H1 (cell line): ENCODE measurements at regions of chr1 and their contacts with region 1.

Region 1: GRCh38 chr1:200510228-200510623 is 100.4 kb upstream of the ZNF281 start:
- DNase-seq: peak in 1 of 2 experiments; percentile 83
- H3K4me3 ChIP-seq: no peak overlapping the region
- H3K27ac ChIP-seq: no peak overlapping the region
- H3K4me1 ChIP-seq: no peaks in the 10 kb centered on the region
- H3K27me3 ChIP-seq: no peaks in the 10 kb centered on the region
- CTCF ChIP-seq: peak; percentile 47 to 91 (median 82)
- EP300 ChIP-seq: no peak
- POLR2A ChIP-seq: no peak
- RAD21 ChIP-seq: peak; percentile 98

Region 2: GRCh38 chr1:200172311-200172710 is 337.9 kb before region 1 on chr1:
- CTCF ChIA-PET with region 1: no interaction called
- POLR2A ChIA-PET with region 1: no interaction called
- DNase-seq: no peak
- H3K4me3 ChIP-seq: no peak overlapping the region
- H3K27ac ChIP-seq: no peak overlapping the region
- H3K4me1 ChIP-seq: peaks cover 0 to 4% (median 0%) of the 10 kb centered on the region in 4 experiments; a peak in 3 of 7 replicates
- H3K27me3 ChIP-seq: no peaks in the 10 kb centered on the region
- CTCF ChIP-seq: no peak
- EP300 ChIP-seq: no peak
- POLR2A ChIP-seq: no peak
- RAD21 ChIP-seq: no peak

Region 3: GRCh38 chr1:200258447-200259375 is 251.5 kb before region 1 on chr1:
- CTCF ChIA-PET with region 1: interaction called, 10 read pairs
- POLR2A ChIA-PET with region 1: no interaction called
- DNase-seq: no peak
- H3K4me3 ChIP-seq: no peak overlapping the region
- H3K27ac ChIP-seq: no peak overlapping the region
- H3K4me1 ChIP-seq: no peaks in the 10 kb centered on the region
- H3K27me3 ChIP-seq: no peaks in the 10 kb centered on the region
- CTCF ChIP-seq: peak in 2 of 3 experiments; percentile 14 to 38; a peak in 2 of 4 replicates
- EP300 ChIP-seq: no peak
- POLR2A ChIP-seq: no peak
- RAD21 ChIP-seq: peak; percentile 33 to 35; a peak in 3 of 4 replicates

Region 4: DNA sequence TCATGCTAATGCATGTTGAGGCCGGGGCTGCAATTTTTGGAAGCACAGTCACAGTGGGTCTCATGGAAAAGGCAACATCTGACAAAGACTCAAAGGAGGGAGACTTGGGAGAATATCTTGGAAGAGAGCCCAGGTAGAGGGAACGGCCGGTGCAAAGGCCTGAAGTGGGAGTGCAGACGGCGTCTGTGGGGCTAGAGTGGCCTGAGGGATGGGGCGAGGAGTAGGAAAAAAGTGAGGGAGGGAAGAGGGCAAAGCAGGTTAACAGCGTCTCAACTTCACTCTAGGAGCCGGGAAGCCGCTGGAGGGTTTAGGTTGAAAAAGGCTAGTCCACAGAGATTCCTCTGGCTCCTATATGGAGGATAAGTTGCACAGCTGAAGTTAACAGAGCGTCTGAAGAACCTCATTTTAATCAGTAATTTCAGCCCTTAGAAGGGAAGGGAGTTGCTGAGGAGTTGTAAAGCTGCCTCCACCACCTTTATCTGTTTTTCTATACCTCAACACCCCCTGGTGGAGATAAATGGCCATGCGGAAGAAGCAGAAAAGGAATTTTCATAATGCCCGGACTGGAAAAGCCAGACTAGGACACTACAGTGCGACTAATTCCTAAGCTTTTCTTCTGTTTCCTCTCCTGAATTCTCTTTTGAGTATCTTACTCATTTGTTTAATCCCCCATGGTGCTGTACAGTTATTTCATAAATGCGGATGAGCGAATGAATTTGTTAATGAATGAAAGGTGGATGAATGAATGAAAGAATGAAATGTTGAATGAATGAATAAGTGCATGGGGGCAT is 21.7 kb before region 1 on chr1:
- CTCF ChIA-PET with region 1: interaction called, 19 read pairs
- POLR2A ChIA-PET with region 1: no interaction called
- DNase-seq: peak in 1 of 2 experiments; percentile 67
- H3K4me3 ChIP-seq: peak overlapping the region in 1 of 4 experiments; percentile 33; a peak in 3 of 8 replicates
- H3K27ac ChIP-seq: no peak overlapping the region
- H3K4me1 ChIP-seq: peaks cover 0 to 2% (median under 1%) of the 10 kb centered on the region in 4 experiments; a peak in 1 of 7 replicates
- H3K27me3 ChIP-seq: no peaks in the 10 kb centered on the region
- CTCF ChIP-seq: peak in 2 of 3 experiments; percentile 69 to 83; a peak in 3 of 4 replicates
- EP300 ChIP-seq: no peak
- POLR2A ChIP-seq: no peak
- RAD21 ChIP-seq: peak; percentile 92 to 94

Region 5: DNA sequence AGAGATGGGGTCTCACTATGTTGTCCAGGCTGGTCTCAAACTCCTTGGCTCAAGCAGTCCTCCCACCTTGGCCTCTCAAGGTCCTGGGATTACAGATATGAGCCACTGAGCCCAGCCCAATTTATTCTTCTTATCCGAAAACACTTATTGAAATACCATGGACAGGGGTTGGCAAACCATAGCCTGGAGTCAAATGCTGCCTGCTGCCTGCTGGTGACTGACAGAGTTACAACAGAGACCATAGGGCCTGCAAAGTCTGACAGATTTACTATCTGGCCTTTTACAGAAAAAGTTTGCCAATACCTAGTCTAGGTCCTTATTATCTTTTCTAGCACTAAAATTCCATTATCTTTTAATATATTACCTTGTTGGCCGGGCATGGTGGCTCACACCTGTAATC is 13.3 kb before region 1 on chr1:
- CTCF ChIA-PET with region 1: interaction called, 65 read pairs
- POLR2A ChIA-PET with region 1: no interaction called
- DNase-seq: no peak
- H3K4me3 ChIP-seq: no peak overlapping the region
- H3K27ac ChIP-seq: no peak overlapping the region
- H3K4me1 ChIP-seq: no peaks in the 10 kb centered on the region
- H3K27me3 ChIP-seq: no peaks in the 10 kb centered on the region
- CTCF ChIP-seq: no peak
- EP300 ChIP-seq: no peak
- POLR2A ChIP-seq: no peak
- RAD21 ChIP-seq: 0 out of 4 replicates have a peak, but pooled peaks of 1 of the 2 experiments have one; percentile 15

Region 6: GRCh38 chr1:200602632-200603031 is 92.4 kb after region 1 on chr1:
- CTCF ChIA-PET with region 1: no interaction called
- POLR2A ChIA-PET with region 1: no interaction called
- DNase-seq: no peak
- H3K4me3 ChIP-seq: no peak overlapping the region
- H3K27ac ChIP-seq: no peak overlapping the region
- H3K4me1 ChIP-seq: no peaks in the 10 kb centered on the region
- H3K27me3 ChIP-seq: no peaks in the 10 kb centered on the region
- CTCF ChIP-seq: no peak
- EP300 ChIP-seq: no peak
- POLR2A ChIP-seq: no peak
- RAD21 ChIP-seq: no peak

Region 7: DNA sequence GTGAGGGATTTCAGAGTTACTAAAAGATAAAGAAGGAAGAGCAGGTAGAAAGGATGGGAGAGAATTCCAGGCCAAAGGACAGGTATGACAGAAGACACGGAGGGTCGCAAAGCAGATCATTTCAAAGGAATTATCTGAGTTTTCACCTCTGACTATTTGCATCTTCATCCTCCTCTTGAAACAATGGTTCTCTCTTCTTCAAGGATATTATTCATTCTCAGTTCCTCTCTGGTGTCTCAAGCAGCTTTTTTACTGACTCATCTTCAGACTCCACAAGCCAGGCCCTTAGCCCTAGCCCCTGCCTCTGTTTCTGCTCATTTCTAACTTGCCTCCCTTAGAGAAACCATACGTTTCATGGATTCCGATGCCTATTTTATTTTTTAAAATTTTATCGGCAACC is 144.4 kb after region 1 on chr1:
- CTCF ChIA-PET with region 1: no interaction called
- POLR2A ChIA-PET with region 1: no interaction called
- DNase-seq: no peak
- H3K4me3 ChIP-seq: no peak overlapping the region
- H3K27ac ChIP-seq: no peak overlapping the region
- H3K4me1 ChIP-seq: no peaks in the 10 kb centered on the region; a peak in 1 of 7 replicates
- H3K27me3 ChIP-seq: no peaks in the 10 kb centered on the region
- CTCF ChIP-seq: no peak
- EP300 ChIP-seq: no peak
- POLR2A ChIP-seq: no peak
- RAD21 ChIP-seq: no peak